GM10248 (cell line): ENCODE measurements at regions of chr1 and their contacts with region 1.

Region 1: GRCh38 chr1:166182281-166182680 is 15.5 kb upstream of the FAM78B start:
- DNase-seq: no peak
- CTCF ChIP-seq: no peak

Region 2: DNA sequence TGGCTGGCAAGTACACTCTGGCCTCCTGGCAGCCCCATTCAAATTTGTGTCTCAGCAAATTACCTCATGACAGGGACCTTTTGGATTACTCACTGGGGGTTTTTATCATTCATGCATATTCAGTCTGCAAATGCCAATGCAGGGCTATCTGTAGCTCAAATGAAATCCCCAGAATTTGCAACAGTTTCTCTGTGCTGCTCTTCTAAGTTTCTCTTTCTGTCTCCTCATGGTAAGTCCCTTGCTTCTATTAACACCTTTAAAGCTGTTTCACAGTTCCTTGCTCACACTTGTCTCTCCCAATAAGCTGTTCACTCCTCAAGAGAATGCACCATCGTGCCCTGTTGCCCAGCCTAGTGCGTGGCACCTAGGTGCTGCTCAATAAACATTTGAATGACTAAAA is 12.2 kb before region 1 on chr1:
- CTCF ChIA-PET with region 1: interaction called, 15 read pairs
- POLR2A ChIA-PET with region 1: no interaction called
- DNase-seq: peak; percentile 51
- CTCF ChIP-seq: no peak

Region 3: DNA sequence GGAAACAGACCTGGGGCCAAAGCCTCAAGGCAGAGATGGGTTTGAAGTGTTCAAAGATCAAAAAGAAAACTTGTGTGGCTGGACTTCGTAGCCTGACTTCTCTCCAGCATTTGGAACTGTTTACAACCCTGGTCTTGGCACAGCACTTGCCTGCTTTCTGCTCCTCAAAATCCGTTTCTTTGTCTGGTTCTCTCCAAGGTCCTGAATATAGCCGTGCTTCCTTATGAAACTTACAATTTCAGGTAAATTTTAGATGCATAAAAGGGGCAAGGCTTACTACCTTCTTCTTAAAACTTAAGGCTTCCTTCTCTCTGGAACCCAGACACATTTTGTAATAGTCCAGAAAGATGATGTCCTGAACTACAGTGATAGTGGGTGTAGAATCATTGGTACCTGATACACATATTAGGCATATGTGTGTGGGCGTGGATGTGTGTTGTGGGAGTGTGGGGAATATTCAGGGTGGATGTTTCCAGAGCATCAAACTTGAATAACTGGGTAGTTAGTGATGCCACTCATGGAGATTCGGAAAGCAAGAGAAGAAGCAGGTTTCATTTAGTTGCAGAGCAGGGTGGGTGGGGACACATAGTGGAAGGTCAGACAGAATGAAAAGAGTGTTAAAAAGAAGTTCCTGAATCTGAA is 10.9 kb after region 1 on chr1:
- CTCF ChIA-PET with region 1: no interaction called
- POLR2A ChIA-PET with region 1: no interaction called
- DNase-seq: no peak
- CTCF ChIP-seq: no peak

Region 4: GRCh38 chr1:166330096-166330495 is 147.8 kb after region 1 on chr1:
- CTCF ChIA-PET with region 1: no interaction called
- POLR2A ChIA-PET with region 1: no interaction called
- DNase-seq: no peak
- CTCF ChIP-seq: no peak